Activated CD4-positive, alpha-beta T cell treated with anti-CD3 and anti-CD28 coated beads for 36 hours (primary cell): ENCODE measurements at regions of chr16 and their contacts with region 1.

Region 1: DNA sequence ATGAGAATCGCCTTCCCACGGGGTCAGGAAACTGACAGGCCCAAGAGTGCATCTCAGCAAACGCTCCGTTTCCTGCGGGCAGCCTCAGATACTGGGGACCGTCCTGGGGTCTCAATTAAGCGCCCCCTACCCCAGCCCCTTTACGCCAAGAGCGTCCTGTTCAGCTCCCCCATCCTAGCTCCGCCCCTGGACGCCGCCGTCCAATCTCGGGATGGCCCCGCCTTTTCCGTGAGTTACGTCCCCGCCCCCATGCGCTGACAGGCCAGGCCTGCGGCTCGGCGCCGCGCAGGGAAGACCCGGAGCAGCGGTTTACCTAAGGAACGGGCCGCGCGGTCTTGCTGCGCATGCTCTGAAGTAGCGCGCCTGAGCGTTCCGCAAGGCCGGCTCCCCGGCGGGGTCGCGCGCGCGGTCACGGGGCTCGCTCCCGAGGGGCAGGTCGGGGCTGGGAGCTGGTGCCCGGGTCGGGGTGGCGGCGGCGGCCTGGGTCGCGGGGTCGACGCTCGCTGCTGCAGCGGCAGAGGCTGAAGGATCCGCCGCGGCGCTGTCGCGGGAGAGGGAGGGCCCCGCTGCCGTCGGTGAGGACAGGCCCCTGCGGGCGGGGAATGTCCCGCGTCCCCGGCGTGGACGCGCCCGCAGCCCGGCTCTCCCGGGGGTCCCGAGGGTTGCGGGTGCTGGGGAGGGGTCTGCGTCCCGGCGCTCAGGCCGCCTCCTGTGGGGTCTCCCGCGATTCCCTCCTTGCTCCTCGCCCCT is at the start of gene FLYWCH1:
- DNase-seq: peak; percentile 100
- ATAC-seq: peak; percentile 98
- H3K4me3 Mint-ChIP-seq: peak within 1 kb of the TSS; percentile 81
- H3K27ac Mint-ChIP-seq: peak within 1 kb of the TSS; percentile 82
- H3K4me1 Mint-ChIP-seq: peaks cover 30% of the 10 kb centered on the region
- H3K27me3 Mint-ChIP-seq: no peaks in the 10 kb centered on the region
- total RNA-seq, gene FLYWCH1: 26.6 to 37.9 TPM

Region 2: DNA sequence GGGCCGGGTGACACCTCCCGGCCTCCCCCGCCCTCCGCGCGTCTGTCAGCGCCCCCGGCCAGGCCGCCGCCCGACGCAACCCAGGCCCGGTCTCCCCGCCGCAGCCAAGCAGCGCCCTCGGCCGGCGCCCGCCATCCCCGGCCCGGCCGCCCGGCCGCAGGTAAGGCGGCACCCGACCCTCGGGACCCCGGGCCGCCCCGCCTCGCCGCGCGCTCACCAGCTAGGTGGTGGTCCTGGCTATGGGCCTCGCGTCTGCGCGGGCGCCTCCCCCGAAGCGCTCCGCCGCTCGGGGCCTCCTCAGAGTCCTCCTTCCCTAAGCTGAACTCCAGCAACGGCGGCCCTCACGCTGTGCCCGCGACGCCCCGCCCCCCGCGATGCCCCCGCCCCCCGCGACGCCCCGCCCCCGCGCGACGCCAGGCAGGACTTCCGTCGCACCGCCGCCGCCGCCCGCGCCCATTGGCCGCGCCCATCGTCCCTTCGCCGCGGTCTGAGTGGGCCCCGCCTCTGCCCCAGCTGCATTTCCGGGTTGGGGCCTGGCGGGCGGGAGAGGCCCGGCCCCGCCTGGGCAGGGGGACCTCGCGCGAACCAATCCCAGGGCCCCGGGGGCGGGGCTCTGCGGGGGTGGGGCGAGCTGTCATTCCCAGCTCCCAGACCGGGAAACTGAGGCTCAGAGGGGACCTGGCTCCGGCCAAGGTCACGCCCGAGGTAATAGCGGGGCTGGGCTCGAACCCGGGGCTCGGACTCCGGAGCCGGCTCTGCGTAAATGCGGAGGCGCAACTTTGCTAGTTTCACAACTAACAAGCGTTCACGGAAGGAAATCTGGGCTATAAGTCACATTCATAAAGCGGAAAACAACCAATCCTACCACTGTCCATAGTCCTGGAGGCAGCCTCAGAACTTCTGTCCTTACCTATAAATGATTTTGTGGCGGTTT is 238.4 kb before region 1 on chr16:
- CTCF ChIA-PET with region 1: no interaction called
- POLR2A ChIA-PET with region 1: no interaction called
- intact Hi-C with region 1: loop called in 1 of 2 experiments (anchors 1 kb)
- DNase-seq: peak; percentile 98
- ATAC-seq: peak; percentile 97
- H3K4me3 Mint-ChIP-seq: peak overlapping the region; percentile 73
- H3K27ac Mint-ChIP-seq: peak overlapping the region; percentile 47
- H3K4me1 Mint-ChIP-seq: peaks cover 28% of the 10 kb centered on the region
- H3K27me3 Mint-ChIP-seq: no peaks in the 10 kb centered on the region

Region 3: DNA sequence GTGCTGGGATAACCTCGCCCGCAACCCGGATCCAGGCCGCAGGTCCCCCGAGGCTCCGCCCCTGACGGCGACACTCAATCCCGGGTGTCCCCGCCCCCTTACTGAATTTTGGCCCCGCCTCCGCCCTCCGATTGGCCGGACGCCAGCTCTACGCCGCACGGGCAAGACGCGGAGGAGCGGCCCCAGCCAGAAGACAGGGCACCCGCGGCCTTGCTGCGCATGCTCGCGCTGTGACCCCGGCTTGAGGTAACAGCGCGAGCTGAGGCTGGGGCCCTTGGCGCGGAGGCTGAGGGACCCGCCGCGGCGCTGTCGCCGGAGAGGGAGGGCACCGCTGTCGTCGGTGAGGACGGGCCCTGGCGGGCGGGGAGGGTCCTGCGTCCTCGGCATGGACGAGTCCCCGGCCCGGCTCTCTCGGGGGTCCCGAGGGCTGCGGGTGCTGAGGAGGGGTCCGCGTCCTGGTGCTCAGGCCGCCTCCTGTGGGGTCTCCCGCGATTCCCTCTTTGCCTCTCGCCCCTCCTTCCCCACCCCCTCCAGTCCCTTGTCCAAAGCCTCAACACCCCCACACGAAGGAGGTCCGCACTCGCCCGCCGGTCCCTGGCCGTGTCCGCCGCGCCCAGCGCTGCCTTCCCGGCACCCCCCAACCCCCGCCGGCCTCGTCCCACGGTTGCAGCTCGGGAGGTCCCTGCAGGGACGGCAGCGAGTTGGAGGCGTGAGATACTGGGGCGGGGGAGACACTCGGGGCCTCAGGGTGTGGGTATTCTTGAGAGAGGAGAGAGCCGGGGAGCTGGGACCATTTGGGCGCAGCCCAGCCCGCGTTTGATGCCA is 28.5 kb before region 1 on chr16 and contains the start of gene FLYWCH2:
- CTCF ChIA-PET with region 1: interaction called, 7 read pairs
- POLR2A ChIA-PET with region 1: interaction called, 13 read pairs
- intact Hi-C with region 1: loop called in 1 of 2 experiments (anchors 1 kb)
- DNase-seq: peak; percentile 99
- ATAC-seq: peak; percentile 84
- H3K4me3 Mint-ChIP-seq: peak within 1 kb of the TSS; percentile 85
- H3K27ac Mint-ChIP-seq: peak within 1 kb of the TSS; percentile 92
- H3K4me1 Mint-ChIP-seq: peaks cover 10% of the 10 kb centered on the region
- H3K27me3 Mint-ChIP-seq: no peaks in the 10 kb centered on the region
- total RNA-seq, gene FLYWCH2: 16.8 to 17.3 TPM

Region 4: DNA sequence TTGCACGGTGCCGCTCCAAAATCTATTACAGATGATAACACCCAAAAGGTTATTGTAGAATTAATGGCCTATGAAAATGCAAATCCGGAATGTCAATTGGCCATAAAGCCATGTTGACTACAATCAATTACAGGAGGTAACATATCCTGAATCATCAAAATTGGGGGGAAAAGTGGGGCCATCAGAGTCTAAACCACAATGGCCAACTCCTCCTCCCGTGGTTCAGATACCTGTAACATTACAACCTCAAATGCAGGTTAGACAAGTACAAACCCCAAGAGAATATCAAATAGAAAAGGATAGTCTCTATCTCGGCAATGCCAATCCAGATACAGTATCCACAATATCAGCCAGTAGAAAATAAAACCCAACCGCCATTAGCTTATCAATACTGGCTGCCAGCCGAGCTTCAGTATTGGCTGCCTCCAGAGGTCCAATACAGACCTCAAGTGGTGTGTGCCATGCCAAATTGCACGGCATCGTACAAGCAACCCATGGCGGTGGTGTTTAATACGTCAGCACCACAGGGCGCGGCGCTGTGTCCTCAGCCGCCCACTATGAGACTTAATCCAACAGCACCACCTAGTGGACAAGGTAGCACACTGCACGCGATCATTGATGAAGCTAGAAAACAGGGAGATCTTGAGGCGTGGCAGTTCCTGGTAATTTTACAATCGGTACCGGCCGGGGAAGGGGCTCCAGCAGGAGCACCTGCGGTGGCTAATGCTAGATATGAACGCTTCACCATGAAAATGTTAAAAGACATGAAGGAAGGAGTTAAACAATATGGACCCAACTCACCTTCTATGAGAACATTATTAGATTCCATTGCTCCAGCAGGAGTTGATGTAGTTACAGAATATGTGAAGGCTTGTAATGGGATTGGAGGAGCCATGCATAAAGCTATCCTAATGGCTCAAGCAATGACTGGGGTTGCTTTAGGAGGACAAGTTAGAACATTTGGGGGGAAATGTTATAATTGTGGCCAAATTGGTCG is 15.2 kb after region 1 on chr16:
- CTCF ChIA-PET with region 1: interaction called, 11 read pairs
- POLR2A ChIA-PET with region 1: no interaction called
- intact Hi-C with region 1: no loop called
- DNase-seq: peak; percentile 93
- ATAC-seq: peak; percentile 99
- H3K4me3 Mint-ChIP-seq: no peak overlapping the region
- H3K27ac Mint-ChIP-seq: no peak overlapping the region
- H3K4me1 Mint-ChIP-seq: peaks cover 11% of the 10 kb centered on the region
- H3K27me3 Mint-ChIP-seq: no peaks in the 10 kb centered on the region

Region 5: DNA sequence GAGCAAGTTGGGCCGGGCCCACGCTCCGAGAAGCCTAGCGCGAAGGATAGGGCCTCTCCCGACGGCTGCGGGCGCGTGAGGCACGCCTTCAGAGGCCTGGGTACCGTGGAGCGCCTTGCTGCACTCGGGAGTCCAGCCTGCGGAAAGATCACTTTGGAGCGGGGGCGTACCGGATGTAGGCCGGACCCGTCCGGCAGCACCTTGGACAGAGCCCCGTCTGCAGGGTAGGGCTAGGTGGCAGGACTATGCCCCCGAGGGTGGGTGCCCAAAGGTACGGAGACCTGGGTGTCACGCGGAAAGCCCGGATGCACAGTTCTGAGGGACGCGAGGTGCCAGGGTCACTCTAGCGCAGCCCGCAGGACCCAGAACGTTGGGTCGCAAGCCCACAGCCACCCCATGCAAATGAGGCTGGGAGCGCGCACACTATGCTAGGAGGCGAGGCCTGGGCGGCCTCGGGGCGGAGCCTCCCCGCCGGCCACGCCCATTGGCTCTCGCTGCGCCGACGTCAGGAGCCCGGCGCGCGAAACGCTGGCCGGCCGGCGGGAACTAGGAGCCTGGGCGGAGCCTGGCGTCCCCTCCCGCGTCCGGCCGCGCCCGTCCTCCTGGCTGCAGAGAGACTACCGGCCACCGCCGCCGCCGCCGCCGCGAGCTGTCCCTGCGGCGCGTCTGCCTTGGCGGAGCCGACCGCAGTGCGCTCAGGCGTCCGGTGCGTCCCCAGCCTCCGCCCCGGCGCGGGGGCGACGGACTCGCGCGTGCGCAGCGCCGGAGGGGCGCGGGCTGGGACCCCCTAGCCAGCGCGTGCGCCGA is 57.2 kb after region 1 on chr16 and contains the start of gene PAQR4:
- CTCF ChIA-PET with region 1: interaction called, 4 read pairs
- POLR2A ChIA-PET with region 1: no interaction called
- intact Hi-C with region 1: loop called in 1 of 2 experiments (anchors 1 kb)
- DNase-seq: peak; percentile 90
- ATAC-seq: peak; percentile 75
- H3K4me3 Mint-ChIP-seq: peak within 1 kb of the TSS; percentile 72
- H3K27ac Mint-ChIP-seq: peak within 1 kb of the TSS; percentile 25
- H3K4me1 Mint-ChIP-seq: peaks cover 31% of the 10 kb centered on the region
- H3K27me3 Mint-ChIP-seq: peaks cover 21% of the 10 kb centered on the region
- total RNA-seq, gene PAQR4: 28.7 to 31.2 TPM

Region 6: GRCh38 chr16:2980227-2981086 is 68.7 kb after region 1 on chr16 and contains the start of gene PKMYT1:
- CTCF ChIA-PET with region 1: interaction called, 3 read pairs
- POLR2A ChIA-PET with region 1: interaction called, 3 read pairs
- intact Hi-C with region 1: loop called in 1 of 2 experiments (anchors 1 kb)
- DNase-seq: peak; percentile 97
- ATAC-seq: peak; percentile 91
- H3K4me3 Mint-ChIP-seq: peak within 1 kb of the TSS; percentile 87
- H3K27ac Mint-ChIP-seq: peak within 1 kb of the TSS; percentile 84
- H3K4me1 Mint-ChIP-seq: peaks cover 6% of the 10 kb centered on the region
- H3K27me3 Mint-ChIP-seq: peaks cover 2% of the 10 kb centered on the region
- total RNA-seq, gene PKMYT1: 101 to 117 TPM

Region 7: DNA sequence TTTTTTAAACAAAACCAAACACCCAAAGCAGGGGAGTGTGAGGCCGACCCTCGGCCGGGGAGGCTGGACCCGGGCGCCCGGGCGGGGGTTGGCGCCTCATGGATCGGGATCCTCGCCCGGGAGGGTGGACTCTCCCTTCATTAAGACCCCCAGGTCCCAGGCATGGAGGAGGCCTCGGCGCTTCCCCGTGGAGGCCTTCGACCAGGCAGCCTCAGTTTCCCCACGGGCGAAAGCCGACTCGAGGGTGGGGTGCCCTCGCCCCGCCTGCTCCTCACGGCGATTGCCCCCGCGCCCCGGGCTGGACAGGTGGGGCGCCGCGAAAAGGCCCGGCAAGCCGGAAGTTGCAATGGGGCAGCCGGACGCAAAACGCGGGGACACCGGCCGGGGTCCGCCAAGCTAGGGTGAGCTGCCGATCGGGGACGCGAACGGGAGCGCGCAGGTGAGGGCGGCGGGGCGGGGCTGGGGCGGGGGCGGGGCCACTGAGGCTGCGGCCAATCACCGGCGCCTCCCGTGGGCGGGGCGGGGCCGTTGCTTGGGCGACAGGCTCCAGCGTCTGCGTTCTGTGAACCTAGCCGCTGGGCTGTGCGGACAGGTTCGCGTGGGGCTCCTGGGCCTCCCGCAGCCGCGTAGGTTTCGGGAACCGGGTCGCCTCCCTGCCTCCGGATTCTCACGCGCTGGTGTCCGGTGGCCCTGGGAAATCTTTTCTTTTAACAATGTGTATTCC is 194.6 kb after region 1 on chr16:
- CTCF ChIA-PET with region 1: no interaction called
- POLR2A ChIA-PET with region 1: no interaction called
- intact Hi-C with region 1: loop called in 1 of 2 experiments (anchors 10 kb)
- DNase-seq: peak; percentile 96
- ATAC-seq: peak; percentile 88
- H3K4me3 Mint-ChIP-seq: peak overlapping the region; percentile 76
- H3K27ac Mint-ChIP-seq: peak overlapping the region; percentile 94
- H3K4me1 Mint-ChIP-seq: peaks cover 31% of the 10 kb centered on the region
- H3K27me3 Mint-ChIP-seq: no peaks in the 10 kb centered on the region

Region 8: DNA sequence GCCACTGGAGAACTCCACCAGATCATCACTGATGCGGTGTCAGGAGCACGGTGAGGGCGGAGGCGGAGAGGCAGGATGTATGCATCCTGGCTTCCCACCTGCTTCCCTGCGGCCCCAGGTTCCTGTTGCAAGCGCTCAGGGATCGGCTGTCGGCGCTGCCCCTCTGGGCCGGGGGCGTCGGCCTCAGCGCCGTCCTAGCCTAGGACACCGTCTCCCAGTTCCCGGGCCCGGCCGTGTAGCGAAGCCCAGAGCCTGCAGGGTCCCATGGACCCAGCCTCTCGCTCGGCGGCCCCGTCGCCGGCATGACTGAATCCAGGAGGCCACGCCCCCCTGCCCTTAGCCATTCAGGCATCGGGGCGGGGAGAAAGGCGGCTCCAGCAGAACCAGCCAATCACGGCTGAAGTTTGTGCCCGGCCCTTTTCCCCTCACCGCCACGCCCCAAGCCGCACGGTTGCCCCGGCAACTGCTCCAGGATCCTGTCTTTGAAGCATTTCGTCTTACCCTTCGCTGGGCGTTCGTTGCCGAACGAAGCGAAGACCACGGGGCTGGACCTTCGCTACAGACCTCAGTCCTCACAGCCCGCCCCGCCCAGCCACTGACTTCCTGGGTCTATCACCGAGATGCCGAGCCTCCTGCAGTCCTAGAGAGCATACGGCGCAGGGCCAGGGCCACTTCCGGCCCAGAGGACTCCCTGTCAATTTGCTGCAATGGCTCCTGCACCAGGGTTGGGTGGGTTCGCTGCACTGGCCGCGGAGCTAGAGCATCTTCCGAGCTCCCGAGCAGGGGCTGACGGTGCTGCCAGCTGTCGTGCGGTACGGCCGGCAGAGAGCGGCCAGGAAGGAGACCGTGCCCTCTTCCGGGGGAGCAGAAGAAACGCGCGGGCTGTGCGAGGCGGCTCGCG is 212.5 kb after region 1 on chr16:
- CTCF ChIA-PET with region 1: no interaction called
- POLR2A ChIA-PET with region 1: no interaction called
- intact Hi-C with region 1: no loop called
- DNase-seq: peak; percentile 99
- ATAC-seq: peak; percentile 92
- H3K4me3 Mint-ChIP-seq: peak overlapping the region; percentile 90
- H3K27ac Mint-ChIP-seq: peak overlapping the region; percentile 90
- H3K4me1 Mint-ChIP-seq: peaks cover 30% of the 10 kb centered on the region
- H3K27me3 Mint-ChIP-seq: no peaks in the 10 kb centered on the region

Region 9: DNA sequence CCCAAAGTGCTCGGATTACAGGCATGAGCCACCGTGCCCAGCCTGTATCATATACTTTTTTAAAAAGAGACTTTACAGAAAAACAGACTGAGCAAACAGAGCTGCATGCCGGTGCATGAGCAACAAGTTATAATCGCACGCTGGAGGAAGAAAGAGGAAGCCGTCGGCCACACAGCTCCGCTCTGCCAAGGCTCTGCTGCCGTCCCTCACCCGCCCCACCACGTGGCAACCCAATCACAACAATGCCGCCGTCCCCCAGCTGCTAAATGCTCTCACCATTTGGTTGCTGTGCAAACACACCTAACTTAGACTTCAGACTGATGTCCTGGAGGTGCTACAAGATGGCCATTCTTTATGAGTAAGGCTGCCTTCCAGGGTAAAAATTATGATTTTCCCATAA is 1121.0 kb after region 1 on chr16:
- CTCF ChIA-PET with region 1: no interaction called
- POLR2A ChIA-PET with region 1: no interaction called
- intact Hi-C with region 1: no loop called
- DNase-seq: peak; percentile 42
- ATAC-seq: no peak
- H3K4me3 Mint-ChIP-seq: no peak overlapping the region
- H3K27ac Mint-ChIP-seq: no peak overlapping the region
- H3K4me1 Mint-ChIP-seq: peaks cover 4% of the 10 kb centered on the region
- H3K27me3 Mint-ChIP-seq: no peaks in the 10 kb centered on the region